Naive thymus-derived CD4-positive, alpha-beta T cell (primary cell): ENCODE measurements at regions of chr4 and their contacts with region 1.

Region 1: GRCh38 chr4:108370291-108371141 is 201.8 kb upstream of the LEF1 start:
- DNase-seq: peak in 5 of 9 donors; percentile 20 to 46 (median 30)
- ATAC-seq: peak; percentile 74
- H3K4me3 ChIP-seq: peak overlapping the region; percentile 33
- H3K4me3 Mint-ChIP-seq: peak overlapping the region; percentile 74 to 94 (median 89)
- H3K27ac ChIP-seq: peak overlapping the region; percentile 9
- H3K27ac Mint-ChIP-seq: peak overlapping the region; percentile 52 to 94 (median 84)
- H3K4me1 ChIP-seq: peaks cover 9 to 24% of the 10 kb centered on the region in 2 donors
- H3K4me1 Mint-ChIP-seq: peaks cover 34 to 82% (median 58%) of the 10 kb centered on the region in 7 donors
- H3K27me3 ChIP-seq: no peaks in the 10 kb centered on the region
- H3K27me3 Mint-ChIP-seq: peaks cover 0 to 47% (median 4%) of the 10 kb centered on the region in 5 donors

Region 2: DNA sequence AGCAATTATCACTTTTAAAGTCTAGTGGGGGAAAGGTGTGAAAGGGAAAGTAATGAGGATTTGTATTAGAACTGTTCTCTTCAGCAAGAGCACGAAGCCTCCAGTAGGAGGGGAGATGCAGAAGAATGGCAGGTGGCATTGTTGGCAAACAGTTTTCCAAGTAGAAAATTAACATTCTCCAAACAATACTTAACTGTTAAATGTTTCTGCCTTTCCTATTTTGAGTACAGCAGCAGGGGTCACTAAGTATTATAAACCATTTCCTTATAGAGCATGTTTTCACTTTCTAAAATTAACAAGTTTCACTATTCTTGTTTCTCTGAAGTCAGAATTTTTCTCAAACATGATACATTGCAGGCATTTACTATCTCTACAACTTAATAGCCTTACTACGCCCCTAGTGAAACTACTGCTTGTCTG is 260.5 kb before region 1 on chr4:
- CTCF ChIA-PET with region 1: no interaction called
- POLR2A ChIA-PET with region 1: no interaction called
- intact Hi-C with region 1: no loop called
- DNase-seq: no peak
- ATAC-seq: no peak
- H3K4me3 ChIP-seq: peak overlapping the region; percentile 7
- H3K4me3 Mint-ChIP-seq: peak overlapping the region; percentile 69 to 89 (median 78)
- H3K27ac ChIP-seq: peak overlapping the region; percentile 80
- H3K27ac Mint-ChIP-seq: peak overlapping the region; percentile 84 to 98 (median 90)
- H3K4me1 ChIP-seq: peaks cover 72 to 98% of the 10 kb centered on the region in 2 donors
- H3K4me1 Mint-ChIP-seq: peaks cover 70 to 97% (median 95%) of the 10 kb centered on the region in 7 donors
- H3K27me3 ChIP-seq: no peaks in the 10 kb centered on the region
- H3K27me3 Mint-ChIP-seq: no peaks in the 10 kb centered on the region

Region 3: DNA sequence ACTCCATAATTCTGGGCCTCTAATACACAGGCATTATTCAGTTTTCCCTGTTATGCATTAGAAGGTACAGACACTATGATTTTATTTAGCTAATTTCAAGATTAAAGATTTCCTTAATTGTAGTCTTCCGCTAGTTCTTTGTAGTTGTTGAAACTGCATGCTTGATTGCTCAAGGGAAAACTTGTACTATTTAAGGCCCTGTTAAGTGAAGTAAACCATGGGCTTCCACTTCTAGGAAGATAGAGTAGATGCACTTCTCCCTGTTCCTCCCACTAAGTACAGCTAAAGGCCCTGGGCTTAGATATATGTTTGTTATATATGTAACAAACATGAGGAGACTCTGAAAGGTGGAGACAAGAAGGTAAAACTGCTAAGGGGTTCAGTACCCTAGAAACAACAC is 14.0 kb after region 1 on chr4:
- CTCF ChIA-PET with region 1: interaction called, 3 read pairs
- POLR2A ChIA-PET with region 1: interaction called, 6 read pairs
- intact Hi-C with region 1: loop called in 1 of 2 experiments (anchors 1 kb)
- DNase-seq: no peak
- ATAC-seq: no peak
- H3K4me3 ChIP-seq: no peak overlapping the region
- H3K4me3 Mint-ChIP-seq: no peak overlapping the region
- H3K27ac ChIP-seq: no peak overlapping the region
- H3K27ac Mint-ChIP-seq: peak overlapping the region in 1 of 9 donors; percentile 35
- H3K4me1 ChIP-seq: no peaks in the 10 kb centered on the region
- H3K4me1 Mint-ChIP-seq: peaks cover 0 to 26% (median 17%) of the 10 kb centered on the region in 7 donors
- H3K27me3 ChIP-seq: no peaks in the 10 kb centered on the region
- H3K27me3 Mint-ChIP-seq: peaks cover 0 to 42% (median 0%) of the 10 kb centered on the region in 5 donors

Region 4: DNA sequence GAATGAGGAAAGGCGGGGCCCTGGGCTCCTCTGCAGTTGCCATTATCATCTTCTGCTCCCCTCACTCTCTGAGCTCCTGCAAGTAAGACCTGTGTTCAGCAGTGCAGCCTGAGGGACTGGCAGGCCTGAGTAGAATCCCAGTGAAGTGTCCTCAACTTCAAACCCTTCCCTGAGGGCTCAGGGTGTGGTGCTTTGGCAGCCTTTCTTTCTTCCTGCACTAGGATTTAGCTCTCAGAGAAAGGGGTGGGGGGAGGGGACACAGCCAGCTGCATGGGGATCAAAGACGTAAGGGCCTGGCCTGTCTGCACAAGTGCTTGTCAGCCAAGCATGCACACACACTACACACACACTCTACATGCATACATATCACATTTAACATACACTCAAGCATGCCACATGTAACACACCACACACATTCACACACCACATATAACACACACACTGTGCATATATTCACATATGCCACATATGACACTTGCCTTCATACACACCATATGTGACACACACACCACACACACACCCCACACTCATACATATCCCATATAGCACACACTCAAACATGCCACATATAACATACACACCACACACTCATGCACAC is 26.5 kb after region 1 on chr4:
- CTCF ChIA-PET with region 1: no interaction called
- POLR2A ChIA-PET with region 1: interaction called, 3 read pairs
- intact Hi-C with region 1: loop called in 1 of 2 experiments (anchors 1 kb)
- DNase-seq: no peak
- ATAC-seq: no peak
- H3K4me3 ChIP-seq: no peak overlapping the region
- H3K4me3 Mint-ChIP-seq: no peak overlapping the region
- H3K27ac ChIP-seq: no peak overlapping the region
- H3K27ac Mint-ChIP-seq: no peak overlapping the region
- H3K4me1 ChIP-seq: peaks cover 0 to 5% of the 10 kb centered on the region in 2 donors
- H3K4me1 Mint-ChIP-seq: peaks cover 2 to 28% (median 16%) of the 10 kb centered on the region in 7 donors
- H3K27me3 ChIP-seq: no peaks in the 10 kb centered on the region
- H3K27me3 Mint-ChIP-seq: peaks cover 0 to 3% (median 0%) of the 10 kb centered on the region in 5 donors

Region 5: DNA sequence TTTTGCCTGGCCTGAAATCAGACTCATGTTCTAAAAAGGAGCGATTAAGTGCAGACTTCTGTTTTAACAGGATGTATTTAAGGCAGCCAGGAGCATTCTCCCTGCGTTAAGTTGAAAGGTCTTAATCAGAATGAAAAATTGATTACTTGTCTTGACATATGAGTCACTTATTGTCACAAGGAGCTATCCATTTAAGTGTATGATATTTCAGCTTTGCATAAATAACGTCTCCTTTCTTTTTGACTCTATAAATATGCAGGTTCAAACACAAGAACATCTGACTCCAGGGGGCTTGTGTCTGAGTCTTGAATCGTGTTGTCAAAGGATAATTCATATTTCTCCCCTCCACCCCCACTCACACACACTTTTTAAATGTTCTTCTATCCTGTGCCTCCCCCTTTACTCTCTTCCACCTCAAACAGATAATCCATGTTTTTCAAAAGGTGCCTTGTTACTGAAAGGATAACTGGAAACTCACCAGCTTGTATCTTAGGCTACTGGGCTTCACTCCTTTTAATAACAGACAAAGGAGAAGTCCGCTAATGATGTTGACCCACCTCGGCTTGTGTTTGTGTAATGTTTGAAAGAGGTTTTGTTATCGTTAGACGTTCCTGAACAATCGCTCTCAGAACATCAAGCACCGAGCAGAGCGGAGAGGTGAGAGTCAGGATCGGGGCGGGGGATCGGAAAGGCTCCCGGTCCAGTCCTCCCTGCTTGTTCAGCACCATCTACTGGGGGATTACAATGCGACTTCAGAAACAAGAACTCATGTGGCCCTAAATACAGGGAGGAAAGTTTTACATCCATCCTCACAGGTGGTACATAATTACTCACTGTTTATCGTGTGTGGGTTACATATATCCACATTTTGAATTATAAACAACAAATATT is 142.3 kb after region 1 on chr4:
- CTCF ChIA-PET with region 1: no interaction called
- POLR2A ChIA-PET with region 1: no interaction called
- intact Hi-C with region 1: loop called in 1 of 2 experiments (anchors 5 kb)
- DNase-seq: peak in 7 of 9 donors; percentile 42 to 68 (median 58)
- ATAC-seq: peak; percentile 82
- H3K4me3 ChIP-seq: peak overlapping the region; percentile 6
- H3K4me3 Mint-ChIP-seq: peak overlapping the region; percentile 72 to 87 (median 80)
- H3K27ac ChIP-seq: no peak overlapping the region
- H3K27ac Mint-ChIP-seq: peak overlapping the region in 7 of 9 donors; percentile 33 to 79 (median 71)
- H3K4me1 ChIP-seq: peaks cover 0 to 10% of the 10 kb centered on the region in 2 donors
- H3K4me1 Mint-ChIP-seq: peaks cover 9 to 37% (median 23%) of the 10 kb centered on the region in 7 donors
- H3K27me3 ChIP-seq: no peaks in the 10 kb centered on the region
- H3K27me3 Mint-ChIP-seq: peaks cover 0 to 11% (median 0%) of the 10 kb centered on the region in 5 donors